A673 (cell line): ENCODE measurements at regions of chr7 and their contacts with region 1.

Region 1: DNA sequence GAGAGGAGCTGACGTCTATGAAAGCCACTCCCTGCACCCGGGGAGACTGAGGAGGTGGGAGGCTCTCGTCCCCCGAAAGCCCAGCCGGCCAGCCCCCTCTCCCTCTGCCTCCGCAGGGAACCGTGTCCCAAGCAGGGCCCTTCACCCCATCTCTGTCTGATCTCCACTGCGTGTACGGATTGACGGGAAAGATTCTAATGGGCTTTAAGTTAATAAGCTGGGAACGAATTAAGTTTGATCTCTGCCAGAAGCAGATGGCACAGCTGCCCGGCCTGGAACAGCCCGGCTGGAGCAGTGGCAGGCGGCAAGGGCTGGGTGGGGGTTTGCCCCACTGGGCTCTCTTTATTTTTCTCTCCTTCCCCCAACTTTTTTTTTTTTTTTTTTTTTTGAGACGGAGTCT is 6.1 kb upstream of the SLC29A4 start:
- DNase-seq: no peak
- H3K4me3 ChIP-seq: no peak overlapping the region
- H3K27ac ChIP-seq: no peak overlapping the region
- H3K4me1 ChIP-seq: no peaks in the 10 kb centered on the region
- H3K27me3 ChIP-seq: no peaks in the 10 kb centered on the region
- CTCF ChIP-seq: no peak

Region 2: DNA sequence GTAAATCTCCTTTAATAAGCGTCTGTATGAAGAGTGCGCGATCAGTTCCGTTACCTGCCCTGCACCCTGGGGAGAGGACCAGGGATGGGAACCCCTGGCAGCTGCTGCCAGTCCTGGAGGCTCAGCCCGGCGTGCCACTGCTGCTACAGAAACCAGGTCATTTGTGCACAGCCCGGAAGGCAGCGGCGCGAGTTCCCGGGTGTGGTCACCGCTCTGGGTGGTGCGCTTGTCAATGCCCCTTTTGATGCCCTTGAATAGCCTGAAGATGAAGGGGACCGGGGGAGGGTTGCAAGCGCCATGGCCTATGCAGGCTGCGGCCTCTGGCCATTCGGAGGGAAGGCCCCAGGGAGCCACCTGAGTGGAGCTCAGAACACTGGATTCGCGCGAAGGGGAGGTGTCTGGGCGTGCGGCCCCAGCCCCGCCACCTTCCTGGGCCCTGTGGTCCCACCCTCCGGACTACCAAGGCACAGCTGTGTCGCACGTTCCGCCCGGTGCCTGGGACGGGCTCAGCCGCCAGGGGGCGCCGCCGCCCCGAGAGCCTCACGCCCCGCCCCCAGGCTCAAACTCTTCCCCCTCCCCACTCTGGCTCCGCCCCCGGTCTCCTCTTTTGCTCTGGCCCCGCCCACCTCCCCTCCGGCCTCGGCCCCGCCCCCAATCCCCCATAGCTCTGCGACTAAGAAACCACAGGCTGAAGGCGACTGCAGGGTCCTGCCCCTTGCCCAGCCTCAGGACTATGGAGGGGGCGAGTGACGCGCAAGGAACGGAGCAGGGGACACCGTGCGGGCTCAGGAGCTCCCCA is 484.7 kb before region 1 on chr7:
- CTCF ChIA-PET with region 1: interaction called, 10 read pairs
- POLR2A ChIA-PET with region 1: no interaction called
- intact Hi-C with region 1: no loop called
- DNase-seq: peak; percentile 49
- H3K4me3 ChIP-seq: no peak overlapping the region
- H3K27ac ChIP-seq: no peak overlapping the region
- H3K4me1 ChIP-seq: no peaks in the 10 kb centered on the region
- H3K27me3 ChIP-seq: no peaks in the 10 kb centered on the region
- CTCF ChIP-seq: peak; percentile 56

Region 3: GRCh38 chr7:5629941-5630340 is 353.3 kb after region 1 on chr7:
- CTCF ChIA-PET with region 1: no interaction called
- POLR2A ChIA-PET with region 1: no interaction called
- intact Hi-C with region 1: no loop called
- DNase-seq: peak; percentile 71
- H3K4me3 ChIP-seq: no peak overlapping the region
- H3K27ac ChIP-seq: peak overlapping the region; percentile 34
- H3K4me1 ChIP-seq: peaks cover 56% of the 10 kb centered on the region
- H3K27me3 ChIP-seq: no peaks in the 10 kb centered on the region
- CTCF ChIP-seq: no peak